ENCODE measurements at regions of chr3 and their contacts with region 1.

Region 1: DNA sequence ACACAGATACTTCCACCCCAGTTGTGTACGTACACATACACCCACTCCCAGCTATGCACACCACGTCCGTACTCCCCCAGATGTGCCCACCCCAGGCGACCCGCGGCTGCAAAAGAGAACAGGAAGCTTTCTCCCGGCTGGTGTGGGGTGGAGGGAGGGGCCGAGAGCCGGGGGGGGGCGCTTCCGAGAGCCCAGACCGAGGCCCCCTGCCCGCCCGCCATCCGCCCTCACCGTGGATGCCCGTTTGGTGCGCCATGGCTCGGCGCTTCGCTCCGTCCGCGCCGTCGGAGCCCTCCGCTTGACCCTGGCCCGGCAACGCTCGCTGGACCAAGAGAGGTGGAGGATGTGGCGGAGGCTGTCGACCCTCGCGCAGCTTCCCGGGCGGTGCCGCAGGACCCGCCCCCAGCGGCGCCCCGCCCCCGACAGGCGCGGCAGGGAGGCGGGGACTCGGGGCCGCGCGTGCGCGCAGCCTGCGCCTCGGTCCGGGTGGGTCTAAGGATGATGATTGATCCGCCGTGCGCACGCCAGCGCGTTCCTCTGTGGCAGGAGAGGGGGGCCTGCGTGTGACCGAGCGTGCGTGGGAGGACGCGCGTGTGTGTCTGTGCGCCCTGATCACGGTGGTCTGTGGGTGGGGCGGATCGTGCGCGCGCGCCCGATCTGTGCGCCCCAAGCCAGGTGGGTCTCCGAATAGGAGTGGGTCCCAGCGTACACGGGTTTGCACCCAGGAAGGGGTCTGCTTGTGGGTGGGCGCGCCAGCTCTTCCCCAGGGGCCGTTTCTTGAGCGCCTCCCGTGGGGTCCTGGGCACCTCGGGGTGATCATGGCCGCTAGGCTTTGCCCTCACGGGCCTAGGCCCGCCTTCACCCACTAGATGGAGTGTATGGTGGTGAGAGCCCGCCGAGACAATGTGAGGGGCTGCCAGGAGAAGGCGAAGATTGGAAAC is at the start of gene TWF2:
- DNase-seq: peak; percentile 97
- H3K4me3 Mint-ChIP-seq: peak within 1 kb of the TSS; percentile 93
- H3K27ac Mint-ChIP-seq: peak within 1 kb of the TSS; percentile 99
- H3K4me1 Mint-ChIP-seq: peaks cover 62% of the 10 kb centered on the region
- H3K27me3 Mint-ChIP-seq: no peaks in the 10 kb centered on the region
- total RNA-seq, gene TWF2: 80.3 and 87.0 TPM in 2 replicates

Region 2: DNA sequence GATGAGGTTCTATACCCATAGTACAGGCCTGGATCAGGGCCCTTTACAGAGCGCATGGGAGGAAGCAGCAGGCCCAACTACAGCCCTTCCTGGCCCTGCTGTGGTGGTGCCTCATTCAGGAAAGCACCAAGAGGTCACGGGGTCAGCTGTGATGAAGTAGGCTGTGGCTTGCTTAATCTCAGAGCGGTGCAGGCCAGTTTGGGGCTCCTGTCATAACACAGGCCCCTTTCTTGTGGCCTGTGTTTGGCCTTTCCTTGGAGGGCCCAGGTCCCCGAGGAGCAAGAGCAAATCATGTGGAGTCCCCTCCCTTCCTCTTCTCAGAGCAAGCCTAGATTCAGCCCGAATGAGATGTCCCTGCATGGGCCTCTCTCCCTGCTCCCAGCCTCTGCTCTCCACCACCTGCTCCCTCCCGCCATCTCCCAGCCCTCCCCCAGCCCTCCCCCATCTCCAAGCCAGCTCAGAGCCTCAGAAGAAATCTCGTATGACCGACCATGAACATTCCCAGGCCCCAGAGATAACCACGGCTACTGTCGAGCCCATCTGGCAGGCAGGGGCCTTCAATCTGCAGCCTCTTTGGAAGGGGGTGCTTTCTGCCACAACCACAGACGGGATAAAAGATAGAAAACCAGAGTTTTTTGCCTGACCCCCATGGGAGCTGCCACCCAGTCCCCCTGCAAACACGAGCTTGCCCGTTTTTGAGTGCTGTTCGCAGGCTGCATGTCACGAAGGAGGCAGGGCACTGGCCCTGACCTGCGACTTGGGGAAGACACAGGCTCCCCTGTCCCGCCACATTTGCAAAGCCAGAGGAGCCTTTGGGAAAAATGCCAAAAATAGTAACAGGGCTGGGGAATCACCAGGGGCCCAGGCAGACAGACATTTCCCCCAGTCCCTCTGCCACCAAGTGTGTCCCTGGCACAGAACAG is 150.3 kb before region 1 on chr3:
- intact Hi-C with region 1: no loop called
- DNase-seq: no peak
- H3K4me3 Mint-ChIP-seq: no peak overlapping the region
- H3K27ac Mint-ChIP-seq: no peak overlapping the region
- H3K4me1 Mint-ChIP-seq: peaks cover 24% of the 10 kb centered on the region
- H3K27me3 Mint-ChIP-seq: no peaks in the 10 kb centered on the region

Region 3: DNA sequence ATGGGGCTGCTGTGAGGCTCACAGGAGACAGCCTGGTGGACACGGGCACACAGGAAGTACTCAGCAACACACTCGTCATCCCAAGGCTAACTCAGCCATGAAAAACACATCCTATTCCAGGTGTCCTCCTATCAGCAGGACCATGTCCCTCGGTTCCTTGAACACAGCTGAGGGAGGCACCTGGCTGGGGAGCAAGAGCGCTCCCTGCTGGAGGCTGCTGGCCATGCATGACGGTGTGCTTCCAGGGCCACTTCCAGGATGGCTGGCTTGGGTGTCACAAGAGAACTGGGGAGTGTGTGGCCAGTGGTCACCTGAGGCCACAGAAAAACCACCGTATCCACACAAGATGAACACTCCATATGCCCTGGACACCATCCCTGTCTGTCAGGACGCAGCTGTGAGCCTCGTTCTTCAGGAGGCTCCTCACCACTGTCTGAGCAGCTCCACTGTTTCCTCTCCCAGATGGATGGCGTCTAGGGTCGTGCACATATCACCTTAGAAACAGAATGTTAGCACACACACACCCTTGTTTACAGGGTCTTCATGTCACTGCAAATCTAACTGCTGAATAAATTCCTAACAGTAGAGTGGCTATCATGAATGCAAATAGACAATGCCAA is 115.8 kb before region 1 on chr3:
- intact Hi-C with region 1: no loop called
- DNase-seq: peak; percentile 94
- H3K4me3 Mint-ChIP-seq: no peak overlapping the region
- H3K27ac Mint-ChIP-seq: no peak overlapping the region
- H3K4me1 Mint-ChIP-seq: peaks cover 27% of the 10 kb centered on the region
- H3K27me3 Mint-ChIP-seq: no peaks in the 10 kb centered on the region

Region 4: GRCh38 chr3:52220380-52221026 is 18.5 kb before region 1 on chr3:
- intact Hi-C with region 1: loop called (anchors 1 kb)
- DNase-seq: peak; percentile 96
- H3K4me3 Mint-ChIP-seq: peak overlapping the region; percentile 37
- H3K27ac Mint-ChIP-seq: no peak overlapping the region
- H3K4me1 Mint-ChIP-seq: peaks cover 66% of the 10 kb centered on the region
- H3K27me3 Mint-ChIP-seq: no peaks in the 10 kb centered on the region

Region 5: DNA sequence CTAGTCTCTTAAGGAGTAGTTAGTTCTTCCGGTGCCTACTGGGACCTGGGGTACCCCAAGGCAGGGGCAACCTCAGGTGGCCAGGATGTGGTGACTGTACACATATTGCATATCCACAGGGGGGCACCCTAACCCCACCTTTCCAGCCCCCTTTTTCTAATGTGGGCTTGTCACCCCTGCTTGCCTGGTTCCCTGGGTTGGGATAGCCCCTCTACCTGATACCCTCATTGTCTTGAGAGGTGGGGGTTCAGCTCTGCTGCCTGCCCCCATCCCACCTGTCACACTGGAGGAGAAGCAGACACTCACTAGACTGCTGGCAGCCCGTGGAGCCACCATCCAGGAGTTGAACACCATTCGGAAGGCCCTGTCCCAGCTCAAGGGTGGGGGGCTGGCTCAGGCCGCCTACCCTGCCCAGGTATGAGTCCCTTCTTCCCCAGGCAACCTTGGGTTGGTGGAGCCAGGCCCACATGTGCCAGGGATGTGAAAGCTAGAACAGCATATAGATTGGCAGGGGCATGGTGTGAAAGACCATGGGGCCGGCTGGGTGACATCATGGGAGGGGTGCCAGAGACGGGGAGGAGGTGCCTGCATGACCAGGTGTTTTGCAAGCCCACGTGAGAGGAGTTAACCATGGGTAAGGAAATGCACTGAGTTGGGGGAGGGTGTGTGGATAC is 52.6 kb after region 1 on chr3:
- intact Hi-C with region 1: loop called (anchors 1 kb)
- DNase-seq: peak; percentile 82
- H3K4me3 Mint-ChIP-seq: no peak overlapping the region
- H3K27ac Mint-ChIP-seq: no peak overlapping the region
- H3K4me1 Mint-ChIP-seq: peaks cover 20% of the 10 kb centered on the region
- H3K27me3 Mint-ChIP-seq: no peaks in the 10 kb centered on the region

Region 6: DNA sequence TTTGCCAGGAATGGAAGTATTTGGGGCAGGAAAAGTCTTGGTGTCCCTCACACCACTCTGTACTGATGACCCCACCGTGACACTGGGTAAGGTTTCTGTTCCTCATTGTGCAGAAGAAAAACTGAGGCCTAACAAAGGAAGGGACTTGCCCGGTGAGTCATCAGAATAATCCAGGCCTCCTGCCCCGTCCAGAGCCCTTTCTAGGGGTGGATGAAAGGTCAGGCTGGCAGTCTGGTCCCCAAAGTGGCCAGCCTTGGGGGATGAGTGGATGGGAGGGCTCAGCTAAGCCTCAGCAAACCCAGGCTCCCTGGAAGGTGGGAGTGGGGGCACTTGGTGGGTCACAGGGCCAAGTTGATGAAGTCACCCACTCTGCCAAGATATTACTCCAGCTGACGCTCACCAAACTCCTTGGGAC is 74.8 kb after region 1 on chr3:
- intact Hi-C with region 1: no loop called
- DNase-seq: no peak
- H3K4me3 Mint-ChIP-seq: no peak overlapping the region
- H3K27ac Mint-ChIP-seq: no peak overlapping the region
- H3K4me1 Mint-ChIP-seq: peaks cover 35% of the 10 kb centered on the region
- H3K27me3 Mint-ChIP-seq: no peaks in the 10 kb centered on the region

Region 7: GRCh38 chr3:52333869-52334557 is 95.0 kb after region 1 on chr3:
- intact Hi-C with region 1: no loop called
- DNase-seq: no peak
- H3K4me3 Mint-ChIP-seq: no peak overlapping the region
- H3K27ac Mint-ChIP-seq: no peak overlapping the region
- H3K4me1 Mint-ChIP-seq: peaks cover 2% of the 10 kb centered on the region
- H3K27me3 Mint-ChIP-seq: no peaks in the 10 kb centered on the region

Measured in activated CD4-positive, alpha-beta T cell treated with anti-CD3 and anti-CD28 coated beads, Interleukin-2, amount 10 ng/mL, durations not matched to agents 24 days and 14 days (primary cell).